Endothelial cell of umbilical vein (primary cell): ENCODE measurements at regions of chr2 and their contacts with region 1.

Region 1: DNA sequence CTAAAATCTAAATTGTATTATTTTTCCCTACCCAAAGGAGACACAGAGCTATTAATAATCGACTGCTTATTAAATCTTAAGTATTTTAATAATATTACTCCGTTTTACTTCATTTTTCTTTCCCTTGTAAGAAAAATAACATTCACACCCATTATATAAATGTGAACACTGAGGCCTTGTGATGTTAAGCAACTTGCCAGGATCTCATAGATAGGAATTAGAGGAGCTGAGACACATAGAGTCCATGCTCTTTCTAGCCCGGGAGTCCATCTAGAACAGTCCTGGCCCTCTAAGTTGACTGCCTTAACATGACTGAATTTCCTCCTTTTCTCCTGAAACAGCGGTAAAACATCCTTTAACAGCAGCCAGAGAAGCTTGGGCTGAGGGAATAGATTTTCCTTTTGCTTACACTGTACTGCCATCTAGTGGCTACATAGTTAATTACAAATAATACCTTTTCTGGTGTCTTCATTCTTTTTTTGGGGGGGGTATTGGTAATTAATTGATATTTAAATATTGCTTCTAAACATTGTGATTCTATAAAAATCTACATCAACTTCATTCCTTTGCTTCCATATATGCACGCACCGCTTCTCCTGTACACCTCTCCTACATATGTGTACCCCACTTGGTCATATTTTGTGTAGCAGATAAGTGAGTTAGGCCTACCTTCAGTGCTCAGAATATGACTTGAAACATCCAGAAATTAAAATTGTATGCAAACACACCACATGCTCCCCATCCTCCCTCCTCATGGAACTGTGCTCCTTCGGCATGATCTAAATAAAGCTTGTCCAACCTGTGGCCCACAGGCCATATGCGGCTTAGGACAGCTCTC is 125.8 kb upstream of the HNMT start:
- DNase-seq: peak; percentile 50
- H3K4me3 ChIP-seq: no peak overlapping the region
- H3K27ac ChIP-seq: no peak overlapping the region
- H3K4me1 ChIP-seq: no peaks in the 10 kb centered on the region
- H3K27me3 ChIP-seq: no peaks in the 10 kb centered on the region
- CTCF ChIP-seq: peak; percentile 18 to 33
- POLR2A ChIP-seq: no peak

Region 2: DNA sequence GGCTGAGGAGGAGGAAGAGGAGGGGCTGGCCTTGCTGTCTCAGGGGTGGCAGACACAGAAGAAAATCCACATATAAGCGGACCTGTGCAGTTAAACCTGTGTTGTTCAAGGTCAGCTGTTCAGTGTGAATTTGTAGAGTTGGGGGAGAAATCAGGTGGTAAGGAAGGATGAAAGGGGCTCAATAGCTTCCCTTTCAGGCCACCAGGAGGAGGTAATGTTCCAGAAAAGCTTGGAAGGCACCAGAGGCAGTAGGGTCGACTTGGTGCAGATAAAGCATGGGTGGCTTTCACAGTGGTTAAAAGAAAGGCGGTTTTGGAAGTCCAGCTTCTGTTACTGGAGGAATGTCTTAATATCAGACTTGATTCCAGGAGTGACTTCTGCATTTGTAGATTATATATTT is 905.8 kb before region 1 on chr2:
- CTCF ChIA-PET with region 1: interaction called, 24 read pairs
- POLR2A ChIA-PET with region 1: no interaction called
- dilution Hi-C with region 1: no loop called
- intact Hi-C with region 1: loop called (anchors 1 kb)
- DNase-seq: peak; percentile 5
- H3K4me3 ChIP-seq: no peak overlapping the region
- H3K27ac ChIP-seq: no peak overlapping the region
- H3K4me1 ChIP-seq: no peaks in the 10 kb centered on the region
- H3K27me3 ChIP-seq: no peaks in the 10 kb centered on the region
- CTCF ChIP-seq: no peak
- POLR2A ChIP-seq: no peak

Region 3: DNA sequence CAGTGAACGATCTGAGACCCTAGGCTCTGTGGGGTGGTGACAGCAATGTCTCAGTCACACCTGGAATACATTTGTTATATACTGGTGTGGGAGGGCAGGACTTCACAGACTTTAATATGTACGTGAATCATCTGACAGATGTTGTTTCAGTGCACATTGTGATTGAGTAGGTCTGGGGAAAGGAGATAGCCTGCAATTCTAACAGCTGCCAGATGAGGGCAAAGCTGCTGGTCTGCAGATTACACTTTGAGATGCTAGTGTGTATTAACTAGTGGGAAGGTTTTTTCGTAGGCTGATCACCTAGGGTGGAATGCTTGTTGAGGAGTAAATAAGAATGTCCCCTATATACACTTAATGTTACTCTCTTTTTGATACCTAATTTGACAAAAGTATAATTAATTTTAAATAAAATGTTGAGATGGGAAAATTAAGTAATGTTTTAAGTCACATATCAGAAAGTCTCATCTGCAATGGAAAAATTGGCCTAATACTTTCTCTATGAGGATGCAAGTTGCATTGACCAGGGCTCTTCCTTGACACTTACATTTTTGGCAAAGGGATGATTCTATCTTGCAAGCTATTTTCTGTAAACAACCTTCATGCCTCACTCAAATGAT is 371.1 kb before region 1 on chr2:
- CTCF ChIA-PET with region 1: interaction called, 23 read pairs
- POLR2A ChIA-PET with region 1: no interaction called
- dilution Hi-C with region 1: no loop called
- intact Hi-C with region 1: loop called (anchors 1 kb)
- DNase-seq: peak; percentile 3
- H3K4me3 ChIP-seq: no peak overlapping the region
- H3K27ac ChIP-seq: no peak overlapping the region
- H3K4me1 ChIP-seq: no peaks in the 10 kb centered on the region
- H3K27me3 ChIP-seq: no peaks in the 10 kb centered on the region
- CTCF ChIP-seq: peak in 1 of 2 donors; percentile 19
- POLR2A ChIP-seq: no peak